HepG2 (cell line): ENCODE measurements at regions of chr9 and their contacts with region 1.

Region 1: GRCh38 chr9:111631071-111631971 is at the start of gene DNAJC25:
- DNase-seq: peak; percentile 96
- ATAC-seq: peak; percentile 89
- H3K4me3 ChIP-seq: peak within 1 kb of the TSS; percentile 73 to 98 (median 91)
- H3K27ac ChIP-seq: peak within 1 kb of the TSS; percentile 80
- H3K4me1 ChIP-seq: peaks cover 64% of the 10 kb centered on the region
- H3K27me3 ChIP-seq: no peaks in the 10 kb centered on the region; a peak in 1 of 5 replicates
- CTCF ChIP-seq: peak; percentile 38
- EP300 ChIP-seq: peak in 1 of 2 experiments; percentile 61; a peak in 1 of 4 replicates
- POLR2A ChIP-seq: peak; percentile 99 to 100
- RAD21 ChIP-seq: peak; percentile 82
- total RNA-seq, gene DNAJC25: 6.3 and 10.2 TPM in 2 replicates

Region 2: GRCh38 chr9:111605041-111605559 is 26.2 kb before region 1 on chr9:
- CTCF ChIA-PET with region 1: no interaction called
- POLR2A ChIA-PET with region 1: interaction called, 5 read pairs
- in situ Hi-C with region 1: no loop called
- intact Hi-C with region 1: loop called (anchors 2 kb)
- DNase-seq: peak; percentile 35
- ATAC-seq: peak; percentile 64
- H3K4me3 ChIP-seq: peak overlapping the region; percentile 29 to 57 (median 56)
- H3K27ac ChIP-seq: peak overlapping the region; percentile 13
- H3K4me1 ChIP-seq: peaks cover 60% of the 10 kb centered on the region
- H3K27me3 ChIP-seq: no peaks in the 10 kb centered on the region
- CTCF ChIP-seq: no peak
- EP300 ChIP-seq: no peak
- POLR2A ChIP-seq: no peak
- RAD21 ChIP-seq: no peak

Region 3: GRCh38 chr9:111661150-111661801 is 30.0 kb after region 1 on chr9 and contains the start of gene GNG10:
- CTCF ChIA-PET with region 1: no interaction called
- POLR2A ChIA-PET with region 1: interaction called, 15 read pairs
- in situ Hi-C with region 1: no loop called
- intact Hi-C with region 1: loop called (anchors 1 kb)
- DNase-seq: peak; percentile 23
- ATAC-seq: peak; percentile 94
- H3K4me3 ChIP-seq: peak within 1 kb of the TSS; percentile 74 to 95 (median 91)
- H3K27ac ChIP-seq: peak within 1 kb of the TSS; percentile 39
- H3K4me1 ChIP-seq: peaks cover 20% of the 10 kb centered on the region
- H3K27me3 ChIP-seq: no peaks in the 10 kb centered on the region; a peak in 1 of 5 replicates
- CTCF ChIP-seq: no peak
- EP300 ChIP-seq: no peak
- POLR2A ChIP-seq: peak in 1 of 2 experiments; percentile 68; a peak in 3 of 4 replicates
- RAD21 ChIP-seq: no peak; the same call in 1 of the 2 replicates
- total RNA-seq, gene GNG10: 29.8 and 45.0 TPM in 2 replicates

Region 4: GRCh38 chr9:111691672-111692329 is 60.5 kb after region 1 on chr9:
- CTCF ChIA-PET with region 1: no interaction called
- POLR2A ChIA-PET with region 1: no interaction called
- in situ Hi-C with region 1: no loop called
- intact Hi-C with region 1: loop called (anchors 2 kb)
- DNase-seq: peak; percentile 52
- ATAC-seq: 0 out of 3 replicates have a peak, but pooled peaks have one; percentile 41
- H3K4me3 ChIP-seq: no peak overlapping the region
- H3K27ac ChIP-seq: no peak overlapping the region
- H3K4me1 ChIP-seq: peaks cover 8% of the 10 kb centered on the region
- H3K27me3 ChIP-seq: no peaks in the 10 kb centered on the region
- CTCF ChIP-seq: peak; percentile 57
- EP300 ChIP-seq: no peak
- POLR2A ChIP-seq: no peak
- RAD21 ChIP-seq: 0 out of 2 replicates have a peak, but pooled peaks have one; percentile 58